Adrenal gland (tissue), 19 donors: ENCODE measurements at regions of chr20 and their contacts with region 1.

Region 1: GRCh38 chr20:17536944-17537444 is 5.8 kb upstream of the BFSP1 start:
- DNase-seq: peak; percentile 69 to 90 (median 76)
- H3K4me3 ChIP-seq: no peak overlapping the region
- H3K27ac ChIP-seq: no peak overlapping the region
- H3K4me1 ChIP-seq: peaks cover 0 to 10% of the 10 kb centered on the region in 2 donors
- H3K27me3 ChIP-seq: no peaks in the 10 kb centered on the region
- CTCF ChIP-seq: peak; percentile 89 to 99 (median 97)
- POLR2A ChIP-seq: no peak

Region 2: GRCh38 chr20:17298171-17298570 is 238.8 kb before region 1 on chr20:
- intact Hi-C with region 1: no loop called
- DNase-seq: no peak
- H3K4me3 ChIP-seq: no peak overlapping the region
- H3K27ac ChIP-seq: no peak overlapping the region
- H3K4me1 ChIP-seq: no peaks in the 10 kb centered on the region
- H3K27me3 ChIP-seq: no peaks in the 10 kb centered on the region
- CTCF ChIP-seq: no peak
- POLR2A ChIP-seq: no peak

Region 3: DNA sequence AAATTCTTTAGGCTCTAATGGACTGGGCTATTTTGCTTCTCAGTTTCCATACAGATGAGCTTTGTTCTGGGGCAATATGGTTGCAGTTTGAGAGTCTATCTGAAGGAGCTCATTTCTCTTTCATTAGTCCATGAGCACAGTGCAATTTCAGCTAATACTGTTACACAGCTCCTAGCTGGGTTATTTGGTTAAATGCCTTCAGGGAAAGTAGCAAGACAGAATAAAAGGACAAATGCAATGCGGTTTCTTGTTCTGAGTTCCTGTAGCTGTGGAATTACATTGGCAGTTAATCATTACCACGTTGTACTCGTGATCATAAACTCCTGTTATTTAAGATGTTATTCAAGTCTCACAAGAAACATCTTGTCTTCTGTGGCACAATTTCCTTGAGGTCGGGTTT is 133.5 kb before region 1 on chr20:
- intact Hi-C with region 1: no loop called
- DNase-seq: no peak
- H3K4me3 ChIP-seq: no peak overlapping the region
- H3K27ac ChIP-seq: no peak overlapping the region
- H3K4me1 ChIP-seq: no peaks in the 10 kb centered on the region
- H3K27me3 ChIP-seq: no peaks in the 10 kb centered on the region
- CTCF ChIP-seq: no peak
- POLR2A ChIP-seq: no peak

Region 4: DNA sequence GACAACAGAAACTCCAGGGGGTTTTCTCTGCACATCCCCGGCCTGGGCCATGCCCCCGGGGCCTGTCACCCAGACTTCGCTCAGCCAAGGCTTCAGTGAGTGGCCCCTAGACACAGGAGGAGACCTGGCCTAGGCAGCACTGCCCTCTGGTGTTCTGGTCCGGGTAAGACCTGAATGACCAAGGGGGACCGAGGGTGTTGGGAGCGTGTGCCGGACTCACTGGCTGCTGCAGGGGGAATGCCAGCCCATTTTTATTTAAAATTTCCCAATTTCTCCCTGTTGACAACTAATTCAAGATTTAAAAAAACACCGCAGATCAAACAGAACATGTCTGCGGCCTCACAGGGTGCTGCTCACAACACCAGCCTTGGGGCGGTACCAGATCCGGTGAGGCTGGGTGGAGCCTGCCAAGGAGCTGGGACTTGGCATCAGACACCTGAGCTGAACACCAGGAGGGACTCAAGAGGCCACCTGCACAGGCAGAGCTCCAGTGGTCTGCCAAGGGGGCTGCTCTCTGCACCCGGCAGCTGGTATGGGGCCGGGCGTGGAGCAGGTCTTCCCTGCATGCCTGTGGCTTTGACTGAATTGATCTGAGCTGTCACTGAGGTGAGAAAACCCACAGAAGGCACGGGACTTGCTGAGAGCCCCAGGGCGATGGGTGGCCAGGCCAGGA is 80.7 kb after region 1 on chr20:
- intact Hi-C with region 1: loop called (anchors 2 to 5 kb)
- DNase-seq: peak in 6 of 7 donors; percentile 40 to 80 (median 69)
- H3K4me3 ChIP-seq: no peak overlapping the region
- H3K27ac ChIP-seq: no peak overlapping the region
- H3K4me1 ChIP-seq: no peaks in the 10 kb centered on the region
- H3K27me3 ChIP-seq: no peaks in the 10 kb centered on the region
- CTCF ChIP-seq: peak; percentile 42 to 88 (median 80)
- POLR2A ChIP-seq: no peak

Region 5: DNA sequence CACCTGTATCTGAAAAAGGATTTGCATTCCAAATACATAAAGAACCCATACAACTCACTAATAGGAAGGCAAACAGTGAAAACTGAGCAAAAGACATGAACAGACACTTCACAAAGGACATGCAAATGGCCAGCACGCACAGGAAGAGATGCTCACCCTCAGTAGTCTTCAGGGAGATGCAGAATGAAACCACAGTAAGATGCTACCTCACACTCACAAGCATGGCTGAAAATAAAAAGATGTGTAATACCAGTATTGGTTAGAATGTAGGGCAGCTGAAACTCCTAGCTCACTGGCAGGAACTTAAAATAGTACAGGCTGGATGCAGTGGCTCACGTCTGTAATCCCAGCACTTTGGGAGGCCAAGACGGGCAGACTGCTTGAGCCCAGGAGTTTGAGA is 367.0 kb after region 1 on chr20:
- intact Hi-C with region 1: loop called in 1 of 2 experiments (anchors 10 kb)
- DNase-seq: no peak
- H3K4me3 ChIP-seq: no peak overlapping the region
- H3K27ac ChIP-seq: no peak overlapping the region
- H3K4me1 ChIP-seq: no peaks in the 10 kb centered on the region
- H3K27me3 ChIP-seq: no peaks in the 10 kb centered on the region
- CTCF ChIP-seq: no peak
- POLR2A ChIP-seq: no peak